PC-3 (cell line): ENCODE measurements at regions of chr1 and their contacts with region 1.

Region 1: GRCh38 chr1:26959722-26960615 is at the start of gene KDF1:
- DNase-seq: peak; percentile 90
- ATAC-seq: peak; percentile 77
- H3K4me3 ChIP-seq: peak within 1 kb of the TSS; percentile 94
- H3K27ac ChIP-seq: peak within 1 kb of the TSS; percentile 43
- H3K4me1 ChIP-seq: peaks cover 25% of the 10 kb centered on the region
- H3K27me3 ChIP-seq: no peaks in the 10 kb centered on the region
- CTCF ChIP-seq: peak; percentile 26; the same call in 1 of the 2 replicates
- total RNA-seq, gene KDF1: 21.7 and 22.9 TPM in 2 replicates

Region 2: GRCh38 chr1:26864610-26865527 is 95.1 kb before region 1 on chr1:
- CTCF ChIA-PET with region 1: interaction called, 12 read pairs
- POLR2A ChIA-PET with region 1: no interaction called
- intact Hi-C with region 1: no loop called
- DNase-seq: peak; percentile 99
- ATAC-seq: peak; percentile 64
- H3K4me3 ChIP-seq: peak overlapping the region; percentile 90
- H3K27ac ChIP-seq: peak overlapping the region; percentile 95
- H3K4me1 ChIP-seq: peaks cover 43% of the 10 kb centered on the region
- H3K27me3 ChIP-seq: no peaks in the 10 kb centered on the region
- CTCF ChIP-seq: 0 out of 2 replicates have a peak, but pooled peaks have one; percentile 20

Region 3: GRCh38 chr1:27010989-27011764 is 51.2 kb after region 1 on chr1:
- CTCF ChIA-PET with region 1: no interaction called
- POLR2A ChIA-PET with region 1: interaction called, 55 read pairs
- intact Hi-C with region 1: loop called (anchors 5 kb)
- DNase-seq: peak; percentile 97
- ATAC-seq: peak; percentile 36
- H3K4me3 ChIP-seq: peak overlapping the region; percentile 60
- H3K27ac ChIP-seq: peak overlapping the region; percentile 90
- H3K4me1 ChIP-seq: peaks cover 54% of the 10 kb centered on the region
- H3K27me3 ChIP-seq: no peaks in the 10 kb centered on the region
- CTCF ChIP-seq: no peak

Region 4: DNA sequence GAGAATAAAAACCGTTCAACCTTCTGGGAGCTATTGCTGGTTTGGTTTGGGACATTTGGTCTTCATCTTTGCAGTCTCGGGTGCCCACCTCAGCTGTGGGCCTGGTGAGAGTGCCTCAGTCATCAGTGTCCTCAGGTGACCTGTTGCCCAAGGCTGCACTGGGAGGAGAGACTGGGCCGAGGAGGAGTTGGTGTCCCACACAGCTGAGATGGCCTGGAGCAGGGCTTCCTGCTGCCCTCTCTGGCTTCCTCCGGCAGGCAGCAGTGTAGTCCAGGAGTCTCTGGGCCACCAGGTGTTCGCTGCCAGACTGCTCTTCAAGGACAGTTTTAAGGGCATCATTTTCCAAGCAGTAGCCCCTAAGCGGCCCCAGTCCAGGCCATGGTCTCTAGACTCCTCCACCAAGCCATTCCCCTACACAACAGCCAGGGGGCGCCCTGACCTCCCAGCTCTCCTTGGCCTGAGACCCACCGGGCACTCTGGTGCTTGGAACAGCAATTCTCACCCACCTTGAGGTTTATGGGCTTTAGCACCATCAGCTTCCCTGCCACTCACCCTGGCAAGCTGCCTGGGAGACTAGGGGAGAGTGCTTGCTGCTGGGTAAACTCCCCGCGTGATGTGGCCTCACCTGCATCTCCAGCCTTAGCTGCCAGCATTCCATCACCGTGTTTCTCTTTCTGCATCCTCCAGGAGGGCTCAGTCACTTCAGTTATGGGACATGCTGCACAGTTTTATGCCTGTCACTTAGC is 372.7 kb after region 1 on chr1:
- CTCF ChIA-PET with region 1: no interaction called
- POLR2A ChIA-PET with region 1: interaction called, 14 read pairs
- intact Hi-C with region 1: no loop called
- DNase-seq: no peak
- ATAC-seq: peak; percentile 57; the same call in 1 of the 2 replicates
- H3K4me3 ChIP-seq: no peak overlapping the region
- H3K27ac ChIP-seq: no peak overlapping the region
- H3K4me1 ChIP-seq: no peaks in the 10 kb centered on the region
- H3K27me3 ChIP-seq: no peaks in the 10 kb centered on the region
- CTCF ChIP-seq: peak; percentile 86